PC-9 (cell line): ENCODE measurements at regions of chrX and their contacts with region 1.

Region 1: DNA sequence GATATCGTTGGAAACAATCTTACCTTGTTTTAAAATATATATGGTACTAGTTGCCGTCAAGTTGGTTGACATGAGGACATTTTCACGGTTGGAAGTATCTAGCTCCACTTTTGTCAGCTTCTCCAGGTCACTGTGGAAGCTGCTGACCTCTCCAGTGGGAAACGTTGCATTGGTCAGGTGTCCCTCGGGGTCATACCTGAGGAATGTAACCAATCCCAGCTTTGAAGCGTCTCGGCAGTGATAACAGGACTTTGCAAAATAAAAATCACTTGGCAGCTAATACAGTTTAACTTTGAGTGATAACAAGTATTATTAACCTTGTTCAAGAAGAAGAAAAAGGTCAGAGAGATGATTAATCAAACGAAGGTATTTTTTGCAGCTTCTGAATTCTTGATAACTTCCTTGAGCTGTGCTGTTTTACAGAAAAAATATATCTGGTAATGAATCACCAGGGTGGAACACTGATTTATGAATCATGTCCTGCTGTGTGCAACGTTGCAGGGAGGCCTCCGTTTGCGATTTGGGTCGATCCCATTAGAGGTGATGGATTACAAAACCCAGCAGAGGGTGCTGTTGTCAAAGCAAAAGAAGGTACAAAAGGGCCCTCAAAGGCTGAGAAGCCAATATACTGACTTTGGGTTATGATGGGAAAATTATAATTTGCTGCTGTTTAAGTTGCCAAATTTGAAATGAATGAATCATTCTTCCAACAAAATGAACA is 60.1 kb downstream of the SH2D1A start:
- DNase-seq: peak; percentile 66 to 91
- H3K4me3 ChIP-seq: no peak overlapping the region
- H3K27ac ChIP-seq: 0 out of 2 replicates have a peak overlapping the region, but pooled peaks have one; percentile 2
- H3K4me1 ChIP-seq: peaks cover 7% of the 10 kb centered on the region
- H3K27me3 ChIP-seq: no peaks in the 10 kb centered on the region
- CTCF ChIP-seq: peak; percentile 83

Region 2: DNA sequence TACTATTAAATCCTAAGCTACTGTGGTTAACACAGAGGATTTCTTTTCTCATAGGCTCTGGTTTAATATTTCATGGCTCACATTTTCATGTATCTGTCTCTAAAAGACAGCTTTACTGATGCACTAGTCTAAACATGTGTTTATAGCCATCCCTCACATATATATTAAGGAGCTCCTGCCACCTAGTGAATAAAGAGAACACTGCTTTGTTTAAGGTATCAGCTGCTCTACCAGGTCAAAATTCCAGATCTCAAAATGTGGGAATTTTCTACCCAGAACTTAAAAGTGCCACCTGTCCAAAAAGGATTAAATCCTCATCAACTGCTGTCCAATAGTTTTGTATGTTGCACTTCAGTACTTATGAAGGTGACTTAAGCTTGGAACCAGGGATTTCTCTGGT is 724.7 kb after region 1 on chrX:
- CTCF ChIA-PET with region 1: no interaction called
- POLR2A ChIA-PET with region 1: no interaction called
- intact Hi-C with region 1: loop called (anchors 1 kb)
- DNase-seq: no peak
- H3K4me3 ChIP-seq: no peak overlapping the region
- H3K27ac ChIP-seq: no peak overlapping the region
- H3K4me1 ChIP-seq: no peaks in the 10 kb centered on the region
- H3K27me3 ChIP-seq: no peaks in the 10 kb centered on the region
- CTCF ChIP-seq: peak; percentile 74